B cell (primary cell): ENCODE measurements at regions of chr6 and their contacts with region 1.

Region 1: DNA sequence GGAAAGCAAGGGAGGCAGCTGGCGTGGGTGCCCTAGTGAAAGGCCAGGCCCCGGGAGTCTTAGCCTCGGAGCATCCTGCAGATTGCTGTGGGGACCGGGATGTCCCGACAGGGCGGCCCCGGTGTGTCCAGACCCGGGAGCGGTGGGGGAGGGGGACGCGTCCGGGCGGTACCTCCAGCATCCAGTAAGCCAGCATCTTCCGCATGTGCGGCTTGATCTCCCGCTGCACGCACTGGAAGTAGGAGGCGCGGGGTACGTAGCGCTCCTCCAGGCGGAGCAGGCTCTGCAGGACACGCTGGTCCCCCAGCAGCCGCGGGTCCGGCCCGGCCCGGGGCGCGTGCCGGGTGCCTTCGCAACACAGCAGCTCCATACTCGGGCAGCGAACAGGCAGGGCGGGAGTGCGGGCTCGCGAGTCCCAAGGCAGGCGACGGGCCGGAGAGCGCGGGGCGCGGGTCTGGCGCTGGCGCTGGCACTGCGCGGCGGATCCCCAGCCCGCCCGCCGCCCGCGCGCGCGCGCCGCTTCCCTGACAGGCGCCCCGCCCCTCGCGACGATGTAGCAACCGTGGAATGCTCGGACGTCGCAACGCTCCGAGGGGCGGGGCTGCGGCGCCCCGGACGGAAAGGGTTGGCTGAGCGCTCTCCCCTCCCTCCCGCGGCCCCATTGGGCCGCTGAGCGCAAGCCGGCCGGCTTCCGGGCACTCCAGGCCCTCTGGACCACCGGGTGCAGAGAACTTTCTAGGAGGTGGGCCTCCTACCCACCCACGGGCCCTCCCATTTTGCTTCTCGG is at the start of gene CCND3:
- DNase-seq: peak; percentile 87
- ATAC-seq: peak; percentile 94
- H3K4me3 ChIP-seq: peak within 1 kb of the TSS; percentile 61 to 77 (median 71)
- H3K4me3 Mint-ChIP-seq: peak within 1 kb of the TSS; percentile 85
- H3K27ac ChIP-seq: peak within 1 kb of the TSS; percentile 10 to 68
- H3K27ac Mint-ChIP-seq: peak within 1 kb of the TSS; percentile 87
- H3K4me1 ChIP-seq: peaks cover 51 to 58% of the 10 kb centered on the region in 2 donors
- H3K4me1 Mint-ChIP-seq: peaks cover 52% of the 10 kb centered on the region
- H3K27me3 ChIP-seq: no peaks in the 10 kb centered on the region
- H3K27me3 Mint-ChIP-seq: no peaks in the 10 kb centered on the region
- CTCF ChIP-seq: no peak
- total RNA-seq, gene CCND3: 136 and 145 TPM in 2 replicates

Region 2: GRCh38 chr6:41920921-41921711 is 20.4 kb before region 1 on chr6 and contains the starts of genes BYSL and MED20:
- CTCF ChIA-PET with region 1: interaction called, 30 read pairs
- POLR2A ChIA-PET with region 1: interaction called, 3 read pairs
- intact Hi-C with region 1: loop called (anchors 1 kb)
- DNase-seq: peak; percentile 98
- ATAC-seq: peak; percentile 93
- H3K4me3 ChIP-seq: peak within 1 kb of the TSS; percentile 67 to 99 (median 97)
- H3K4me3 Mint-ChIP-seq: peak within 1 kb of the TSS; percentile 98
- H3K27ac ChIP-seq: peak within 1 kb of the TSS; percentile 91 to 96
- H3K27ac Mint-ChIP-seq: peak within 1 kb of the TSS; percentile 98
- H3K4me1 ChIP-seq: peaks cover 26 to 29% of the 10 kb centered on the region in 2 donors
- H3K4me1 Mint-ChIP-seq: peaks cover 47% of the 10 kb centered on the region
- H3K27me3 ChIP-seq: no peaks in the 10 kb centered on the region
- H3K27me3 Mint-ChIP-seq: no peaks in the 10 kb centered on the region
- CTCF ChIP-seq: peak; percentile 93
- total RNA-seq, gene BYSL: 10.5 and 11.1 TPM in 2 replicates
- total RNA-seq, gene MED20: 18.2 and 24.2 TPM in 2 replicates

Region 3: GRCh38 chr6:41929924-41930323 is 11.5 kb before region 1 on chr6:
- CTCF ChIA-PET with region 1: interaction called, 16 read pairs
- POLR2A ChIA-PET with region 1: interaction called, 8 read pairs
- intact Hi-C with region 1: no loop called
- DNase-seq: no peak
- ATAC-seq: no peak
- H3K4me3 ChIP-seq: no peak overlapping the region
- H3K4me3 Mint-ChIP-seq: no peak overlapping the region
- H3K27ac ChIP-seq: no peak overlapping the region
- H3K27ac Mint-ChIP-seq: peak overlapping the region; percentile 15
- H3K4me1 ChIP-seq: peaks cover 5 to 7% of the 10 kb centered on the region in 2 donors
- H3K4me1 Mint-ChIP-seq: peaks cover 13% of the 10 kb centered on the region
- H3K27me3 ChIP-seq: no peaks in the 10 kb centered on the region
- H3K27me3 Mint-ChIP-seq: no peaks in the 10 kb centered on the region
- CTCF ChIP-seq: no peak

Region 4: DNA sequence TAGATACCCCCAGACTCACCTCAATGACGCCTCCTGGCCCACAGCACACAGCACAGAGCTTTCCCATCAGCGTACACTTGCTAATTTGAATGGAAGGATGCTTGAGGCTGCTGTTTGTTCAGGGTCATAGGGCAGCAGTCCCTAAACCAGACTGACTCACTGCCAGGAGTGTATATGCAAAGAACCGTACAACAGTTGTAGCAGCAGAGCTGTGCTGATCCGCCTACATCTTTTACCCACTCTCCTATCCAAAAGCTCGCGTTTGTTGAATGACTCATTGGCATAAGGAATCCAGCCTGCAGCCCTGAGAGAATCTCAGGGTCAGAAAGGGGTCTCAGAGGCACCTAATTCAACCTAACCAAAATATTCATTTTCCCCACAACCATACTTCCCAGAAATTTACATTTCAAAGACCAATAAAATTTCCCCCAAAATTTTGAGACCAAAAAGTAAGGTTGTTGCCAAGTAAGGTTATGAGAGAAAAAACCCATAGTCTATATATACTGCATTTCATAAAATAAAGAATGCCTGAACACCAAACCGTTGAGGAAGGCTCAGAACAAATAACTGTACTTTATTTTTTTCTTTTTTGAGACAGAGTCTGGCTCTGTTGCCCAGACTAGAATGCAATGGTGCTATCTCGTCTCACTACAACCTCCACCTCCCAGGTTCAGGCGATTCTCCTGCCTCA is 35.5 kb after region 1 on chr6:
- CTCF ChIA-PET with region 1: interaction called, 3 read pairs
- POLR2A ChIA-PET with region 1: interaction called, 8 read pairs
- intact Hi-C with region 1: loop called (anchors 5 kb)
- DNase-seq: no peak
- ATAC-seq: peak; percentile 39
- H3K4me3 ChIP-seq: no peak overlapping the region
- H3K4me3 Mint-ChIP-seq: peak overlapping the region; percentile 32
- H3K27ac ChIP-seq: peak overlapping the region in 1 of 2 donors; percentile 52
- H3K27ac Mint-ChIP-seq: peak overlapping the region; percentile 80
- H3K4me1 ChIP-seq: peaks cover 44 to 59% of the 10 kb centered on the region in 2 donors
- H3K4me1 Mint-ChIP-seq: peaks cover 62% of the 10 kb centered on the region
- H3K27me3 ChIP-seq: no peaks in the 10 kb centered on the region
- H3K27me3 Mint-ChIP-seq: no peaks in the 10 kb centered on the region
- CTCF ChIP-seq: no peak